Aorta (tissue), 5 donors: ENCODE measurements at regions of chr15 and their contacts with region 1.

Region 1: DNA sequence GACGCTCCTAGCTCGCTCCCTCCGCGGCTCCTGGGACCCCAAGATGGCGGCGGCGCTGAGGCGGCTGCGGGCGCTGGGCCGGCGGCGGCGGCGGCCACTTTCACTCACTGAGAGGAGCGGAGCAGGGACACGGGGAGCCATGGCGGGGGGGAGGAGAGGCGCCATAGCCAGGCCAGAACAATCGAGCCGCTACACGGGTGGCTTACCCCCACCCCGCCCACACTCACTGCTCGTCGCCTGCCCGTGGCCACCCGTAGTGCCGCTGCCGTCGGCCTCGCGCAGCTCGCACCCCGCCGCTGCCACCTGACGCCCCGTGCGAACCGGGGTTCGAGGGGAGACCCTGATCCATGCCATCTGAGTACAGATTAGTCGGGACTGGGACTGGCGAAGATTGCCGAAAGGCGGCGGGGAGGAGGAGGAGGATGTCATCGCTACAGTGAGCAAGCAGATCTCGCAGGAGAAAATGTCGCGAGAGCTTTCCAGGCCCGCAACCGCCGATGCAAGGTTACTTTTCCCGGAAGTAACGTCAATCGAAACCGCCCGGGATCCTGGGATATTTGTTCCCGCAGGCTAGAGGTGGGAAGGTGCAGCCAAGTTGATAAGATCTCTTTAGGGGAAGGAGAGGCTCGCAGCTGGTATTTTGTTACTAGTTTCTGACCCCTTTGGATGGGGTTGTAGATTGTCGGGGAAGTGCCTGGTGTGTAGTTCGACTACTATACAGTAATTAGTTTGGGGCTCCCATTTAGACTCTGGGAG is at the start of gene INO80:
- DNase-seq: peak; percentile 99 to 100
- ATAC-seq: peak; percentile 98
- H3K4me3 ChIP-seq: peak within 1 kb of the TSS; percentile 78 to 91
- H3K27ac ChIP-seq: peak within 1 kb of the TSS; percentile 87 to 94
- H3K4me1 ChIP-seq: no peaks in the 10 kb centered on the region
- H3K27me3 ChIP-seq: no peaks in the 10 kb centered on the region
- total RNA-seq, gene INO80: 23.5 to 25.1 TPM

Region 2: DNA sequence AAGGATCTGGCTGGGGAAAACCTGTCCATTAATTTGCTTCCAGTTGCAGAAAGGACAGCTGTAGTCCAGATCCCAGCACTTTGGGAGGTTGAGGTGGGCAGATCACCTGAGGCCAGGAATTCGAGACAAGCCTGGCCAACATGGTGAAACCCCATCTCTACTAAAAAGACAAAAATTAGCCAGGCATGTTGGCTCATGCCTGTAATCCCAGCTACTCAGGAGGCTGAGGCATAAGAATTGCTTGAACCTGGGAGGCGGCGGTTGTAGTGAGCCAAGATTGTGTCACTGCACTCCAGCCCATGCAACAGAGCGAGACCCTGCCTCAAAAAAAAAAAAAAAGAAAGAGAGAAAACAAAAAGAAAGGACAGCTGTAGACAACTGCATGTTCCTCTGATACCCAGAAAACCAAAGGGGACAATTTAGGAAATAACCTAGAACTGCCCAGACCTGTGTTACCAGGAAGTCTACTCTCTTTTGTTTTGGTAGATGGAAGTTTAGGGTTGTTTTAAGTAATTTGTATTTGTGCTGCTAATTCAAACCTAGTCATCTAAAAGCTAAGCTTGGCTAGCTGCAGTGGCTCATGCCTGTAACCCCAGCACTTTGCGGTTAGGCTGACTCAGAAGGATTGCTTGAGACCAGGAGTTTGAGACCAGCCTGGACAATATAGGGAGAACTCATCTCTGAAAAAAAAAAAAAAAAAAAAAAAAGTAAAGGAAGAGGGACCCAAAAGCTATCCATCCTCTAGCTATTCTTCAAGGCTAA is 91.6 kb after region 1 on chr15:
- intact Hi-C with region 1: no loop called
- DNase-seq: no peak
- ATAC-seq: no peak
- H3K4me3 ChIP-seq: no peak overlapping the region
- H3K27ac ChIP-seq: no peak overlapping the region
- H3K4me1 ChIP-seq: no peaks in the 10 kb centered on the region
- H3K27me3 ChIP-seq: no peaks in the 10 kb centered on the region

Region 3: GRCh38 chr15:41230650-41231533 is 114.6 kb after region 1 on chr15 and contains the starts of genes CHP1 and EXD1:
- intact Hi-C with region 1: loop called in 1 of 2 experiments (anchors 5 kb)
- DNase-seq: peak; percentile 99
- ATAC-seq: peak; percentile 99
- H3K4me3 ChIP-seq: peak within 1 kb of the TSS; percentile 60 to 74
- H3K27ac ChIP-seq: peak within 1 kb of the TSS; percentile 73 to 85
- H3K4me1 ChIP-seq: no peaks in the 10 kb centered on the region
- H3K27me3 ChIP-seq: no peaks in the 10 kb centered on the region
- total RNA-seq, gene CHP1: 60.4 to 60.8 TPM
- total RNA-seq, gene EXD1: not detected

Region 4: DNA sequence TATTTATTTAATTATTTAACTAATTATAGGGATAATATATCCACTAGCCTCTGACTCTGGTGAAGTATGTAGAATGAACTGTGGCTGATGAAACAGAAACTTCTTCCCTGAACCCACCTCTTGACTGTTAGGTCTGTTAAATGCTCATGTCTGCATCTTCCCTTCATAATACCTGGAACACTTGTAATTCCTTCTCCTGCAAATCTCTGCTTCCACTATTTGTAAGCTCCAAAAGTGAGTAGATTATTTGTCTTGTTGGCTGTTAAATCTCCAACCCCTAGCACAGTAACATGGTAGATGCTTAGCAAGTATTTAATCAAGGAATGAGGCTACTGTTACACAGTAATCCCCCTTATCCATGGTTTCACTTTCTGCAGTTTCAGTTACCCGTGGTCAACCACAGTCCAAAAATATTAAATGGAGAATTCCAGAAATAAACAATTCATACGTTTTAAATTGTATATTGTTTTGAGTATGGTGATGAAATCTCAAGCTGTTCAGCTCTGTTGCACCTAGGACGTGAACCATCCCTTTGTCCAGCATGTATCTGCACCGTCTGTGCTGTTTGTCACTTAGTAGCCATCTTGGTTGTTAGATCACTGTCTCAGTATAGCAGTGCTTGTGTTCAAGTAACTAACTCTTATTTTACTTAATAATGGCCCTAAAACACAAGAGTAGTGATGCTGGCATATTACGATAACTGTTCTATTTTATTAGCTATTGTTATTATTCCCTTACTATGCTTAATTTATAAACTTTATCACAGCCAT is 1798.6 kb after region 1 on chr15:
- intact Hi-C with region 1: no loop called
- DNase-seq: no peak
- ATAC-seq: no peak
- H3K4me3 ChIP-seq: no peak overlapping the region
- H3K27ac ChIP-seq: no peak overlapping the region
- H3K4me1 ChIP-seq: peaks cover 0 to 4% of the 10 kb centered on the region in 2 donors
- H3K27me3 ChIP-seq: no peaks in the 10 kb centered on the region